ENCODE measurements at regions of chr2 and their contacts with region 1.

Region 1: DNA sequence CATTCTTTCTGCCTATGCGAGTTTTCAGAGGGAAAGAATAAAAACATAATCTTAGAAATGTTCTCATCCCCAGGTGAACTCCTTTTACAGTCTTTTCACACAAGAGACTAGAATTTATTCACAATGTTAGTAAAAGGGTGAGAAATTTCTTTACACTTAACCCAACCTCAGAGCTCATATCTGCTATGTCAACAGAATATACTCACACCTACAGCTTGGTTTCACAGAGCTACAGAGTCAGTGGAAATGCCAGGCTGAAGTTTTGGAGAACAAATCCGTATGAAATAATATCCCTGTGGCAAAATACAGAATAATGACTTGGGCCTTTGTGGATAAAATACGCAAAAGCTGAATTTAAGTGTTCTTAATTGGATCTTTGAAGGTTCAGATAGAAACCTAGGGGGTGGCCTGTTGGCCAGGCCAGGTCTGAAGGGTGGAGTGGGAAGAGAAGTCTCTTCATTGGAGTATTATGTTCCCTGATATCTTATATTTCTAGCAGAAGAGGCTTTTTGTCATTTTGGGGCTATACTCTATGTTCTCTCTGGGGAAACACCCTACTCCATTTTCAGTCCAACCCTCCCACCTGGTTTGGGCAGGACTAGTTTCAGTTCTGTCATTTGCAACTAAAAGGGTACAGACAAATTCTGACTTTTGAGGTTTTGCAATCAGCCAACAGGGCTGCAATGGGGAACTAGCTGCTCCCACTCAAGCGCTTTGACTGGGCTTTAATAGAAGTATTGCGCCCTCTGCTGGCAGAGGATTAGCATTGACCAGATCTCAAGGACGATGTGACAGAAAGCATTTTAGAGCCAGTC is 25.7 kb downstream of the FBXO48 start:
- DNase-seq: peak; percentile 93
- H3K4me3 ChIP-seq: no peak overlapping the region
- H3K27ac ChIP-seq: no peak overlapping the region
- H3K4me1 ChIP-seq: no peaks in the 10 kb centered on the region
- H3K27me3 ChIP-seq: no peaks in the 10 kb centered on the region
- CTCF ChIP-seq: peak; percentile 90

Region 2: GRCh38 chr2:68121873-68122679 is 319.3 kb before region 1 on chr2:
- CTCF ChIA-PET with region 1: interaction called, 20 read pairs
- POLR2A ChIA-PET with region 1: no interaction called
- intact Hi-C with region 1: loop called (anchors 1 kb)
- DNase-seq: peak; percentile 90
- H3K4me3 ChIP-seq: no peak overlapping the region
- H3K27ac ChIP-seq: no peak overlapping the region
- H3K4me1 ChIP-seq: no peaks in the 10 kb centered on the region
- H3K27me3 ChIP-seq: no peaks in the 10 kb centered on the region
- CTCF ChIP-seq: peak; percentile 96

Region 3: GRCh38 chr2:68196120-68196716 is 245.2 kb before region 1 on chr2:
- CTCF ChIA-PET with region 1: interaction called, 3 read pairs
- POLR2A ChIA-PET with region 1: no interaction called
- intact Hi-C with region 1: loop called (anchors 5 kb)
- DNase-seq: peak; percentile 75
- H3K4me3 ChIP-seq: no peak overlapping the region
- H3K27ac ChIP-seq: no peak overlapping the region
- H3K4me1 ChIP-seq: peaks cover 21% of the 10 kb centered on the region
- H3K27me3 ChIP-seq: no peaks in the 10 kb centered on the region
- CTCF ChIP-seq: peak; percentile 88

Region 4: DNA sequence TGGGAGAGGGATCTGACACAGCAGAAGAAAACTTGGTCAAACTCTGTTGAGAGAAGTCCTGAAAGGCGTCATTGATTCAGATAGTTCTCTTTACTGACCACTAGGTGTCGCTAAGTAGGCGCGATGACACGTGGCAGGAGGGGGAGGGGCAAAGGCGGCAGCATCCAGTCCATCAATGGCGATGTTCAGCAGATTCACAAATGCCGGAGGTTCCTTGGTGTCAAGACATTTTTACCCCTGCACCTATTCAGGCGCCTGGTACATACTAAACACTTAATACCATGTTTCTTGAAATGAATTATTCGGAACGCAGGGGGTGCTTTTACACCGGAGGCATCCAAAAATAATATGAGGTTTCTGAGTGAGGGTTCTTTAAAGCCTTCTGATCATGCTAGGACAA is 79.3 kb before region 1 on chr2:
- CTCF ChIA-PET with region 1: no interaction called
- POLR2A ChIA-PET with region 1: no interaction called
- intact Hi-C with region 1: loop called (anchors 1 kb)
- DNase-seq: peak; percentile 87
- H3K4me3 ChIP-seq: no peak overlapping the region
- H3K27ac ChIP-seq: no peak overlapping the region
- H3K4me1 ChIP-seq: no peaks in the 10 kb centered on the region
- H3K27me3 ChIP-seq: no peaks in the 10 kb centered on the region
- CTCF ChIP-seq: peak; percentile 86

Region 5: DNA sequence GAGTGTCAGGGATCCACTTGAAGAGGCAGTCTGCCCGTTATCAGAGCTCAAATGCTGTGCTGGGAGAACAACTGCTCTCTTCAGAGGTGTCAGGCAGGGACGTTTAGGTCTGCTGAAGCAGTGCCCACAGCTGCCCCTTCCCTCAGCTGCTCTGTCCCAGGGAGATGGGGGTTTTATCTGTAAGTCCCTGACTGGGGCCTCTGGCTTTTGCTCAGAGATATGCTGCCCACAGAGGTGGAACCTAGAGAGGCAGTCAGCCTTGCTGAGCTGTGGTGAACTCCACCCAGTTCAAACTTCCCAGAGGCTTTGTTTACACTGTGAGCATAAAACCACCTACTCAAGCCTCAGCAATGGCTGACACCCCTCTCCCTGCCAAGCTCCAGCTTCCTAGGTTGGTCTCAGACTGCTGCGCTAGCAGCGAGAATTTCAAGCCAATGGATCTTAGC is 38.2 kb before region 1 on chr2:
- CTCF ChIA-PET with region 1: no interaction called
- POLR2A ChIA-PET with region 1: interaction called, 16 read pairs
- intact Hi-C with region 1: no loop called
- DNase-seq: no peak
- H3K4me3 ChIP-seq: no peak overlapping the region
- H3K27ac ChIP-seq: no peak overlapping the region
- H3K4me1 ChIP-seq: no peaks in the 10 kb centered on the region
- H3K27me3 ChIP-seq: peaks cover 8% of the 10 kb centered on the region
- CTCF ChIP-seq: no peak

Region 6: DNA sequence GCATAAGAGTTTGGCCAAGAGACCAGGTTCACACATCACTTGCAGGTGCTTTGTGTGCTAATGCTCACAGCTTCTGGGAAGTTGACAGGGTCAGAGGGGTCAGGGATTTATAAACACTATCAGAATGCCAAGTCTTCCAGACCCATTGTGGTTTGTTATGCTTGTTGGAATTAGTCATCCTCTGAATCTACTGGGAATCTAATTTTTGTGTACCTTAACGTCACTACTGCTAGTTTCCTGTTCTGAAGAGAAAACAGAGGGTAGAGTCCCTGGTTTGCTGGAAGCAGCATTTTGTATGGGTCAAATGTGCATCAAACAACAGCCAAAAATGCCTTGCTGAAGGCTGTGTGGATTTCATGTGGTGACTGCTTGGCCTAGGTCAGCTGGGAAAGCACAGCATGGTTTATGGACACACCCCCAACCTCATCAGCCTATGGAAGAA is 604.9 kb after region 1 on chr2:
- CTCF ChIA-PET with region 1: no interaction called
- POLR2A ChIA-PET with region 1: no interaction called
- intact Hi-C with region 1: no loop called
- DNase-seq: no peak
- H3K4me3 ChIP-seq: no peak overlapping the region
- H3K27ac ChIP-seq: peak overlapping the region; percentile 24
- H3K4me1 ChIP-seq: no peaks in the 10 kb centered on the region
- H3K27me3 ChIP-seq: no peaks in the 10 kb centered on the region
- CTCF ChIP-seq: no peak